Adrenal gland (tissue), 19 donors: ENCODE measurements at regions of chr10 and their contacts with region 1.

Region 1: GRCh38 chr10:42866115-42866995 is 83.8 kb downstream of the BMS1 start:
- DNase-seq: peak; percentile 80 to 92 (median 85)
- H3K4me3 ChIP-seq: no peak overlapping the region
- H3K27ac ChIP-seq: no peak overlapping the region
- H3K4me1 ChIP-seq: peaks cover 0 to 16% of the 10 kb centered on the region in 2 donors
- H3K27me3 ChIP-seq: peaks cover 11% of the 10 kb centered on the region
- CTCF ChIP-seq: peak; percentile 56 to 80 (median 68)
- POLR2A ChIP-seq: no peak

Region 2: DNA sequence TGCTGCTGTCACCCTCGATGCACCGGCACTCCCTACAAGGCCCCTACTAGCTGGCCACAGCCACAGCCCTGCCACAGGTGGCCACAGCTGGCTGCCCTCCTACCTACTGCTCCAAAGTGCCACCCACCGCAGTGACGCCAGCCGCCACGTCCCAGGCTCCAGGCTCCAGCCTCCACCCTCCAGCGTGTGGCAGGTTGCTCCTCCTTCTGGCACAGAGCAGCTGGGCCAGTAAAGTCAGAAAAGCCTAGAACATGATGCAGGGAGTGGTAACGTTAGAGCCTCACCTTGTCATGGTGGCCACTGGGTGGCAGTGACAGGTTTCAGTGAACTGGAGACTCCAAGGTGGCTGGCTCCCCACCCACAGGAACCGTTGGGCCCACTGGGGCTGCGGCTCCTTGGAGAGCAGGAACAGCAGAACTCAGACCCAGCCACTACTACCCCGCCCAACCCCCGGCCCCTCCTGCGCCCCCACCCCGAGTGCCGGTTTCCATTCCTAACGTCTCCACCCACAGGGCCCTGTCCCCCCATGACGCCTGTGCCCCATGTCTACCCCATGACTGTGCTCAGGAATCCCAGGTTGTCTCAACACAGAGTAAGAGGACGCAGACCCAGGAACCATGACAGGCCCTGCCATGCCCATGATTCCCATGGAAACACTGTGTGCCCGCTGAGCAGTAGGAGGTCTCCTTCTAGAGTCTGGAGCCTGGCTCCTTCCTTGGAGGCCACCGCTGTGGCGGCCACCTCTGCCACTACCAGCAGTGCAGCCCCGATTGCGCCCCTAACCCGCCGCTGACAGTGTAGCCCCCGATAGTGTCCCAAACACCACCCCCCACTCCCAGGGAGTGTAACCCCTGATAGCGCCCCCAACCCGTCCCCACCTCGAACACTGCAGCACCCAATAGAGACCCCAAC is 175.7 kb before region 1 on chr10:
- intact Hi-C with region 1: no loop called
- DNase-seq: no peak
- H3K4me3 ChIP-seq: no peak overlapping the region
- H3K27ac ChIP-seq: no peak overlapping the region
- H3K4me1 ChIP-seq: no peaks in the 10 kb centered on the region
- H3K27me3 ChIP-seq: no peaks in the 10 kb centered on the region
- CTCF ChIP-seq: no peak
- POLR2A ChIP-seq: no peak

Region 3: DNA sequence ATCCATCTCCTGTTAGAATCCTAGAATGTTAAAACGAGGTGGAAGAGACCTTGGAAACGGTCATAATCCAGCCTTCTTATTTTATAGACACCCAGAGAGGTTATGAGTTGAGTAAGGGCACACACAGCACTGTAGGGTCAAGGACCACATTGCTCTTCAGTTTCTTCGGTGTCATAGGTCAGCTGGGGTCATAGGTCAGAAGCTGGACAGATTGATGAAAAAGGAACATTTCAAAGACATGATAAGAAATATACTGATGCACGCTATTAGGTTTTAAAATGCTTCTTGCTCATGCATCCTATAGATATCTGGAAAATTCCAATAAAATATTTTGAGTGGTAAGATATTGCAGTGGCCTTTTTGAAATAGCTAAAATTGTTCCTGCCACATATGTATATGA is 143.8 kb before region 1 on chr10:
- intact Hi-C with region 1: no loop called
- DNase-seq: no peak
- H3K4me3 ChIP-seq: no peak overlapping the region
- H3K27ac ChIP-seq: no peak overlapping the region
- H3K4me1 ChIP-seq: no peaks in the 10 kb centered on the region
- H3K27me3 ChIP-seq: no peaks in the 10 kb centered on the region
- CTCF ChIP-seq: no peak
- POLR2A ChIP-seq: no peak

Region 4: DNA sequence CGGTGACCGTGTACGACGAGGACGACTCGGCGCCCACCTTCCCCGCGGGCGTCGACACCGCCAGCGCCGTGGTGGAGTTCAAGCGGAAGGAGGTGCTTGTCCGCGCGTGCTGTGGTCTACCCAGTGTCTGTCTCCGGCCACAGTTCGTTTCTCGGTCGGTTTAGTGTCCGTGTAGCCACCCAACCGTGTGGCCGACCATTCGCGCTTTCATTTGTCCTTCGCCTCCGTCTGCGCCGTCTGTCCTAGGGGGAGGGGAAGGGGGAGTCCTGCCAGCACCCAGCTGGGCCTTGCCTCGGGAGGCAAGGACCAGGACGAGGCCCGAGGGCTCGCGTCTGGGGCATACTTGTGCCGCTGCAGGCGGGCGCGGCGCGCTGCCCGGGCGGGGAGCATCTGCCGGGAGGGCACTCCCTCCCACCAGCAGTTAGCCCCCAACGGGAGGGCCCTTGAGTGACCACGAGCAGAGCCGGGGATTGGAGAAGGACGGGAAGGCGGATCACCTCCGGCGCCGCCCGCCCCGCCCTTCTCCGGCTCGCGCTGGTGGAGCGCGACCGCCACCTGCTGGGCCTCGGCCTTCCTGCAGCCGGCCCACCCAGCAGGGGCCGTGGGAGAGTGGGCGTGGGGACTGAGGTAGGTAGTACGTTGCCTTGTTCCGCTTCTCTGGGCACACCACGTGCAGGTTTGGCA is 238.9 kb after region 1 on chr10:
- intact Hi-C with region 1: loop called (anchors 2 to 5 kb)
- DNase-seq: peak; percentile 75 to 86 (median 83)
- H3K4me3 ChIP-seq: peak overlapping the region in 2 of 4 donors; percentile 23 to 52
- H3K27ac ChIP-seq: peak overlapping the region in 3 of 5 donors; percentile 17 to 79 (median 64)
- H3K4me1 ChIP-seq: peaks cover 3 to 17% of the 10 kb centered on the region in 2 donors
- H3K27me3 ChIP-seq: no peaks in the 10 kb centered on the region
- CTCF ChIP-seq: peak; percentile 98 to 100 (median 100)
- POLR2A ChIP-seq: no peak